ENCODE measurements at regions of chr2 and their contacts with region 1.

Region 1: GRCh38 chr2:224025874-224026273 is 13.2 kb downstream of the SERPINE2 start:
- DNase-seq: peak in 8 of 9 donors; percentile 47 to 78 (median 68)
- ATAC-seq: peak; percentile 93
- H3K4me3 ChIP-seq: no peak overlapping the region
- H3K4me3 Mint-ChIP-seq: peak overlapping the region; percentile 31 to 86 (median 60)
- H3K27ac ChIP-seq: peak overlapping the region; percentile 56
- H3K27ac Mint-ChIP-seq: peak overlapping the region; percentile 85 to 96 (median 92)
- H3K4me1 ChIP-seq: peaks cover 0 to 56% of the 10 kb centered on the region in 2 donors
- H3K4me1 Mint-ChIP-seq: peaks cover 37 to 86% (median 70%) of the 10 kb centered on the region in 7 donors
- H3K27me3 ChIP-seq: no peaks in the 10 kb centered on the region
- H3K27me3 Mint-ChIP-seq: no peaks in the 10 kb centered on the region

Region 2: GRCh38 chr2:224008702-224009261 is 17.1 kb before region 1 on chr2:
- CTCF ChIA-PET with region 1: no interaction called
- POLR2A ChIA-PET with region 1: interaction called, 5 read pairs
- intact Hi-C with region 1: loop called in 1 of 2 experiments (anchors 2 kb)
- DNase-seq: no peak
- ATAC-seq: no peak
- H3K4me3 ChIP-seq: no peak overlapping the region
- H3K4me3 Mint-ChIP-seq: no peak overlapping the region
- H3K27ac ChIP-seq: no peak overlapping the region
- H3K27ac Mint-ChIP-seq: no peak overlapping the region
- H3K4me1 ChIP-seq: no peaks in the 10 kb centered on the region
- H3K4me1 Mint-ChIP-seq: peaks cover 2 to 17% (median 9%) of the 10 kb centered on the region in 7 donors
- H3K27me3 ChIP-seq: no peaks in the 10 kb centered on the region
- H3K27me3 Mint-ChIP-seq: no peaks in the 10 kb centered on the region

Region 3: GRCh38 chr2:224086226-224086914 is 60.5 kb after region 1 on chr2:
- CTCF ChIA-PET with region 1: no interaction called
- POLR2A ChIA-PET with region 1: no interaction called
- intact Hi-C with region 1: no loop called
- DNase-seq: no peak
- ATAC-seq: no peak
- H3K4me3 ChIP-seq: no peak overlapping the region
- H3K4me3 Mint-ChIP-seq: no peak overlapping the region
- H3K27ac ChIP-seq: no peak overlapping the region
- H3K27ac Mint-ChIP-seq: no peak overlapping the region
- H3K4me1 ChIP-seq: no peaks in the 10 kb centered on the region
- H3K4me1 Mint-ChIP-seq: no peaks in the 10 kb centered on the region
- H3K27me3 ChIP-seq: no peaks in the 10 kb centered on the region
- H3K27me3 Mint-ChIP-seq: peaks cover 0 to 2% (median 0%) of the 10 kb centered on the region in 5 donors

Region 4: GRCh38 chr2:224319455-224320149 is 293.7 kb after region 1 on chr2:
- CTCF ChIA-PET with region 1: no interaction called
- POLR2A ChIA-PET with region 1: no interaction called
- intact Hi-C with region 1: no loop called
- DNase-seq: no peak
- ATAC-seq: peak; percentile 34
- H3K4me3 ChIP-seq: no peak overlapping the region
- H3K4me3 Mint-ChIP-seq: no peak overlapping the region
- H3K27ac ChIP-seq: no peak overlapping the region
- H3K27ac Mint-ChIP-seq: no peak overlapping the region
- H3K4me1 ChIP-seq: no peaks in the 10 kb centered on the region
- H3K4me1 Mint-ChIP-seq: no peaks in the 10 kb centered on the region
- H3K27me3 ChIP-seq: no peaks in the 10 kb centered on the region
- H3K27me3 Mint-ChIP-seq: peaks cover 14 to 39% (median 20%) of the 10 kb centered on the region in 5 donors

Region 5: GRCh38 chr2:224594840-224595239 is 569.0 kb after region 1 on chr2:
- CTCF ChIA-PET with region 1: no interaction called
- POLR2A ChIA-PET with region 1: no interaction called
- intact Hi-C with region 1: no loop called
- DNase-seq: no peak
- ATAC-seq: no peak
- H3K4me3 ChIP-seq: no peak overlapping the region
- H3K4me3 Mint-ChIP-seq: no peak overlapping the region
- H3K27ac ChIP-seq: no peak overlapping the region
- H3K27ac Mint-ChIP-seq: no peak overlapping the region
- H3K4me1 ChIP-seq: no peaks in the 10 kb centered on the region
- H3K4me1 Mint-ChIP-seq: peaks cover 0 to 5% (median 0%) of the 10 kb centered on the region in 7 donors
- H3K27me3 ChIP-seq: no peaks in the 10 kb centered on the region
- H3K27me3 Mint-ChIP-seq: peaks cover 0 to 7% (median 0%) of the 10 kb centered on the region in 5 donors

Measured in naive thymus-derived CD4-positive, alpha-beta T cell (primary cell).